B cell (primary cell): ENCODE measurements at regions of chr17 and their contacts with region 1.

Region 1: DNA sequence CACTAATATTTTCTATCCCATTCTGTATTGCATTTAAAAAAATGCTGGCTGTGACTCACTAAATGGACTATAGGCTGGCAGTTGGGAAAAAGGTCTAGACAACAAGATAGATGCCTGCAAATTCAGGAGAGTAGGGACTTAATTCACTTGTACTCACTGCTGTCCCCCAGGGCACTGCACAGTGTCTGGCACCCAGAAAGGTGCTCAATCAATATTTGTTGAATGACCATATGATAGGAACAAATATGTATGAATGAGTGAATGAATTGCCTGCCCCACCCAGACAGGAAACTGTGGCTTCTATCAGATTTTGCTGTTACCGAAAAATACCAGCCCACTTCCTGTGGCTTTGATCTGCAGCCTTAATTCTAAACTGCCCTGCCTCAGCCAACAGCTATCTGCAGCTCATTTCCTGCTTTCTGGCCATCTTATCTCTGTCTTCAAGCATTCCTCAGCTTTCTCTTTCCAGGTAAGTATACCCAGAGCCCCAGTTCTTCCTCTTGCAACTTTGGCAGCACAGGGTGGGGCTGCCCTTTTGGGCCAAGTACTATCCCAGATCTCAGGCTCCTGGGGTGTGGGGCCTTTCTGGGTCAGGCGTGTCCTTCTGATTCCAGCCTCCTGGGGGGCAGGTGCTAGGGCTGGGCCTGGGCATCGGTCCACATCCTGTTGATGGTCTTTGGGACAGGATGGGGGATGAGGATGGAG is 15.3 kb upstream of the TNS4 start:
- DNase-seq: peak; percentile 74
- ATAC-seq: peak; percentile 88
- H3K4me3 ChIP-seq: peak overlapping the region; percentile 3 to 52 (median 40)
- H3K4me3 Mint-ChIP-seq: peak overlapping the region; percentile 89
- H3K27ac ChIP-seq: no peak overlapping the region
- H3K27ac Mint-ChIP-seq: peak overlapping the region; percentile 81
- H3K4me1 ChIP-seq: peaks cover 46 to 56% of the 10 kb centered on the region in 2 donors
- H3K4me1 Mint-ChIP-seq: peaks cover 62% of the 10 kb centered on the region
- H3K27me3 ChIP-seq: no peaks in the 10 kb centered on the region
- H3K27me3 Mint-ChIP-seq: no peaks in the 10 kb centered on the region
- CTCF ChIP-seq: no peak

Region 2: DNA sequence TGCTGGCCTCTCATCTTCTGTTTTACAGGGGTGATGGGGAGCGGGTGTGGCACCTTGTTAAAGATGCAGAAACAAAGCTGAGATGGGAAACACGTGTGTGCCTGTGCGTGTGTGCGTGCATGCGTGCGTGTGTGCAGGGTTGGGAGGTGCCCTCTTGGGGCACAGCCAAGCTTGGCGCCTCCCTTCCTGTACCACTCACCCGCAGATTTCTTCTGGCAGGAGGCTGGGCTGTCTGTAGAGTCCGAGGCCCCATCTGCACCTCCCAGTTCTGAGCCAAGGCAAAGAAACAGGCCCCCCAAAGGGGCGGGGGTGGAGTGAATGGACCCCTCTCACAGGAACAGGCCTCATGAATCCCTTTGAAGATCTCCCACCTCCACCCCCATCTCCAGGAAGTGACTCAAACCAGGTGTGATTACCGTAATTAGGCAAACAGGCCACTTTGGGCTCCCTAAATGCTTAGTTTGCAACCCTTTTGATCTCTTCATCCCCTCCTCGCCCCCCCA is 36.2 kb before region 1 on chr17:
- CTCF ChIA-PET with region 1: interaction called, 7 read pairs
- POLR2A ChIA-PET with region 1: interaction called, 3 read pairs
- intact Hi-C with region 1: loop called (anchors 1 kb)
- DNase-seq: peak; percentile 89
- ATAC-seq: peak; percentile 86
- H3K4me3 ChIP-seq: peak overlapping the region in 3 of 5 experiments; percentile 3 to 39 (median 5)
- H3K4me3 Mint-ChIP-seq: peak overlapping the region; percentile 80
- H3K27ac ChIP-seq: peak overlapping the region; percentile 53 to 86
- H3K27ac Mint-ChIP-seq: peak overlapping the region; percentile 92
- H3K4me1 ChIP-seq: peaks cover 44 to 56% of the 10 kb centered on the region in 2 donors
- H3K4me1 Mint-ChIP-seq: peaks cover 45% of the 10 kb centered on the region
- H3K27me3 ChIP-seq: no peaks in the 10 kb centered on the region
- H3K27me3 Mint-ChIP-seq: no peaks in the 10 kb centered on the region
- CTCF ChIP-seq: no peak

Region 3: GRCh38 chr17:40632216-40632615 is 115.5 kb after region 1 on chr17:
- CTCF ChIA-PET with region 1: no interaction called
- POLR2A ChIA-PET with region 1: no interaction called
- intact Hi-C with region 1: no loop called
- DNase-seq: no peak
- ATAC-seq: no peak
- H3K4me3 ChIP-seq: no peak overlapping the region
- H3K4me3 Mint-ChIP-seq: no peak overlapping the region
- H3K27ac ChIP-seq: no peak overlapping the region
- H3K27ac Mint-ChIP-seq: no peak overlapping the region
- H3K4me1 ChIP-seq: no peaks in the 10 kb centered on the region
- H3K4me1 Mint-ChIP-seq: no peaks in the 10 kb centered on the region
- H3K27me3 ChIP-seq: no peaks in the 10 kb centered on the region
- H3K27me3 Mint-ChIP-seq: no peaks in the 10 kb centered on the region
- CTCF ChIP-seq: no peak